Naive thymus-derived CD4-positive, alpha-beta T cell (primary cell): ENCODE measurements at regions of chr4 and their contacts with region 1.

Region 1: DNA sequence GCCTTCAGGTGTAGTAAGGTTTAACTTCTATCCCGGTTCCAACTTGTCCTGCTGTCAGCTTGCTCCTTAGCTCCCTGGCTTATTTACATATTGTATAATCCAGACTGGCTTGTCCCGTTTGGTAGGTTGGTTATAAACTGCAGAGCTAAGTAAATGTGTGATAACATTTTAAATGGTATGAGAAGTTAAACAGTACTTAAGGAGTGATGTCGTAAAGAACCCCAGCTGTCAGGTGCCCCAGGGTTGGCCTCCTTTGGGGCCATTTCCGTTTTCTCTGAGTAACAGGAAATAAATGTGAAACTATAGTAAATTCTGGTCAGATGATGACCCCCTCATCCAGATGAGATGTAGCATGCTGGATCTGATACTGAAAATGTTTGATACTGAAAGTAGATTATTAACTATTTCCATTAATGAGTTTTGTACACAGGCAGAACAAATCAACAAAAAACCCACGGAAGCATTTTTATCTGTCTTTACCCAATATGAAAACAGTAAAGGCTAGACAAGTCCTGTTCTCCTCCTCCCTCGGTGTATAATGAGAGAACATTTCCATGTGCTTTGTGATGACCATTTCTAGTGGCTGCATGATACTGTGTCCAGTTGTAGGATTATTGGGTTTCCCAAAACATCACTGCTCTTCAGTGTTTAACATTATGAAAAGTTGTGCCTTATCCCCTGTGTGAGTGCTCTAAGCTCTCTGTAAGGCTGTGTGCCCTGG is 22.4 kb downstream of the GAB1 start:
- DNase-seq: peak in 2 of 9 donors; percentile 20 to 30
- ATAC-seq: peak; percentile 83
- H3K4me3 ChIP-seq: peak overlapping the region; percentile 14
- H3K4me3 Mint-ChIP-seq: peak overlapping the region; percentile 52 to 72 (median 66)
- H3K27ac ChIP-seq: no peak overlapping the region
- H3K27ac Mint-ChIP-seq: peak overlapping the region in 8 of 9 donors; percentile 2 to 85 (median 46)
- H3K4me1 ChIP-seq: peaks cover 0 to 9% of the 10 kb centered on the region in 2 donors
- H3K4me1 Mint-ChIP-seq: peaks cover 14 to 21% (median 17%) of the 10 kb centered on the region in 7 donors
- H3K27me3 ChIP-seq: no peaks in the 10 kb centered on the region
- H3K27me3 Mint-ChIP-seq: peaks cover 0 to 5% (median 0%) of the 10 kb centered on the region in 5 donors

Region 2: GRCh38 chr4:142846729-142847596 is 512.1 kb before region 1 on chr4:
- CTCF ChIA-PET with region 1: no interaction called
- POLR2A ChIA-PET with region 1: no interaction called
- intact Hi-C with region 1: no loop called
- DNase-seq: peak; percentile 39 to 81 (median 75)
- ATAC-seq: peak; percentile 89
- H3K4me3 ChIP-seq: peak overlapping the region; percentile 86
- H3K4me3 Mint-ChIP-seq: peak overlapping the region; percentile 85 to 94 (median 92)
- H3K27ac ChIP-seq: peak overlapping the region; percentile 54
- H3K27ac Mint-ChIP-seq: peak overlapping the region in 5 of 9 donors; percentile 26 to 76 (median 56)
- H3K4me1 ChIP-seq: peaks cover 5 to 7% of the 10 kb centered on the region in 2 donors
- H3K4me1 Mint-ChIP-seq: peaks cover 10 to 28% (median 16%) of the 10 kb centered on the region in 7 donors
- H3K27me3 ChIP-seq: peaks cover 0 to 4% of the 10 kb centered on the region in 2 donors
- H3K27me3 Mint-ChIP-seq: peaks cover 5 to 26% (median 22%) of the 10 kb centered on the region in 5 donors

Region 3: DNA sequence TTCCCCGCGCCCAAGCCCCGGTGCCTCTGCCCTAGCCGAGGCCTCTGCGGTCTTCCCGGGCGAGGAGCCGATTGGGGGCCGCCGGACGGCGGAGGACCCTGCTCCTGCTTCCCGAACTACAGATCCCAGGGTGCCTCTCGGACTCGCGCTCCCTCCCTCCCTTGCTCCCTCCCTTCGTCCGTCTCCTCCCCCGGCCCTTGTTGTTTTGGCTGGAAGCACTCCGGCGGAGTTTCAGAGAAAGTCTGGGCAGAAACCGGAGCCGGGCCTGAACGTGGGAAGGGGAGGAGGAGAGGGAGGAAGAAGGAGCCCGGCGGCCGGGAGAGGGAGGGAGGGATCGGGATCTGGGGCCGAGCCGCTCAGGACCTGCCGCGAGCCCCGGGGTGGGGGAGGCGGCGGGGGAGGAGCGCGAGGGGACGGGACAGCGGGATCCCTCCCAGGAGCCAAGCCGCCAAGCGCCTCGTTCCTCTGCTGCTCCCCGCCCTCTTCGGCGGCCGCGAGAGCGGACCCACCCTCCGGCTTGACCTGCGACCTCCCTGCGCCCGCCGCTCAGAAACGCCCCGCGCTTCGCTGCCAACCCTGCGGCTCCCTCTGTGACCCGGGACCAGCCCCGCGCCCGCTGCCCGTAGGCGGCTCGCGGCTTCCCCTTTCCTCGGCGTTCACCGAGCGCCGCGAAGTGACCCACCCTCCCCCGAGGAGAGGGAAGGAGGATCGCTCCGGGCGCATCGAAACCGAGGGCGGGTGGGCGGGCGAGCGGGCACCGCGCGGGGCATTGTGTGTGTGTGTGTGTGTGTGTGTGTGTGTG is 22.9 kb before region 1 on chr4:
- CTCF ChIA-PET with region 1: no interaction called
- POLR2A ChIA-PET with region 1: no interaction called
- intact Hi-C with region 1: loop called in 1 of 2 experiments (anchors 1 kb)
- DNase-seq: peak in 2 of 9 donors; percentile 25 to 56
- ATAC-seq: peak; percentile 68
- H3K4me3 ChIP-seq: peak overlapping the region; percentile 13
- H3K4me3 Mint-ChIP-seq: peak overlapping the region; percentile 45 to 91 (median 74)
- H3K27ac ChIP-seq: no peak overlapping the region
- H3K27ac Mint-ChIP-seq: no peak overlapping the region
- H3K4me1 ChIP-seq: no peaks in the 10 kb centered on the region
- H3K4me1 Mint-ChIP-seq: peaks cover 4 to 12% (median 5%) of the 10 kb centered on the region in 7 donors
- H3K27me3 ChIP-seq: peaks cover 3 to 19% of the 10 kb centered on the region in 2 donors
- H3K27me3 Mint-ChIP-seq: peaks cover 39 to 65% (median 49%) of the 10 kb centered on the region in 5 donors